CD4-positive, alpha-beta memory T cell (primary cell): ENCODE measurements at regions of chr19 and their contacts with region 1.

Region 1: DNA sequence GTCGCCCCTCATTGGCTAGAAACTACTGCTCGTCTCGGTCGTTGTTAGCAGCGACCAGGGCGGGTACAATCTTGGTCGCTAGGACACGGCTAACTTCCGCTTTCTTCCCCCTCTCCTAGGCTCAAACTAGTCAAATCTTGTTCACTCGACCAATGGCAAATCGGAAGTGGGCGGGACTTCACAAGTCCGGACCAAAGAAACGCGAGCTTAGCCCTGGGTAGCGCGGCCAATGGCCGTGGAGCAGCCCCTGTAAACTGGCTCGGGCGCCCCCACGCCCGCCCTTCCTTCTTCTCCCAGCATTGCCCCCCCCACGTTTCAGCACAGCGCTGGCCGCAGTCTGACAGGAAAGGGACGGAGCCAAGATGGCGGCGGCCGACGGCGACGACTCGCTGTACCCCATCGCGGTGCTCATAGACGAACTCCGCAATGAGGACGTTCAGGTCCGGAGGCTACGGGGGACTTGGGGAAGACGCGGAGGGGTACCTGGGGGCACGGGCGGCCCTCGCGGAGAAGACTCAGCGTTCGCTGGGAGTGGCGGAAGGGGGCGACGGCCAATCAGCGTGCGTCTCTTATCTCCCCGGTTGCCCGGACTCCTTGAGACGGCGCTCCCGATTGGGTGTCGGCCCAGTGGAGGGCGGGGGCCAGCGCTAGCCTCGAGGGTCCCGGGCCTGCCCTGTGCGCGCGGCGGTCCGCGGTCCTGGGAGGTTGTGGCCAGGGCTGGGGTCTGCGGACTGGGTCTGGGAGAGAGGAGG is at the start of gene PPP2R1A:
- DNase-seq: peak; percentile 97 to 100 (median 99)
- H3K4me3 ChIP-seq: peak within 1 kb of the TSS; percentile 75 to 87
- H3K4me3 Mint-ChIP-seq: peak within 1 kb of the TSS; percentile 94 to 99 (median 98)
- H3K27ac ChIP-seq: peak within 1 kb of the TSS; percentile 93
- H3K27ac Mint-ChIP-seq: peak within 1 kb of the TSS; percentile 92 to 100 (median 99)
- H3K4me1 ChIP-seq: peaks cover 53% of the 10 kb centered on the region
- H3K4me1 Mint-ChIP-seq: peaks cover 34 to 58% (median 43%) of the 10 kb centered on the region in 4 donors
- H3K27me3 ChIP-seq: no peaks in the 10 kb centered on the region
- H3K27me3 Mint-ChIP-seq: no peaks in the 10 kb centered on the region
- total RNA-seq, gene PPP2R1A: 166 to 175 TPM

Region 2: DNA sequence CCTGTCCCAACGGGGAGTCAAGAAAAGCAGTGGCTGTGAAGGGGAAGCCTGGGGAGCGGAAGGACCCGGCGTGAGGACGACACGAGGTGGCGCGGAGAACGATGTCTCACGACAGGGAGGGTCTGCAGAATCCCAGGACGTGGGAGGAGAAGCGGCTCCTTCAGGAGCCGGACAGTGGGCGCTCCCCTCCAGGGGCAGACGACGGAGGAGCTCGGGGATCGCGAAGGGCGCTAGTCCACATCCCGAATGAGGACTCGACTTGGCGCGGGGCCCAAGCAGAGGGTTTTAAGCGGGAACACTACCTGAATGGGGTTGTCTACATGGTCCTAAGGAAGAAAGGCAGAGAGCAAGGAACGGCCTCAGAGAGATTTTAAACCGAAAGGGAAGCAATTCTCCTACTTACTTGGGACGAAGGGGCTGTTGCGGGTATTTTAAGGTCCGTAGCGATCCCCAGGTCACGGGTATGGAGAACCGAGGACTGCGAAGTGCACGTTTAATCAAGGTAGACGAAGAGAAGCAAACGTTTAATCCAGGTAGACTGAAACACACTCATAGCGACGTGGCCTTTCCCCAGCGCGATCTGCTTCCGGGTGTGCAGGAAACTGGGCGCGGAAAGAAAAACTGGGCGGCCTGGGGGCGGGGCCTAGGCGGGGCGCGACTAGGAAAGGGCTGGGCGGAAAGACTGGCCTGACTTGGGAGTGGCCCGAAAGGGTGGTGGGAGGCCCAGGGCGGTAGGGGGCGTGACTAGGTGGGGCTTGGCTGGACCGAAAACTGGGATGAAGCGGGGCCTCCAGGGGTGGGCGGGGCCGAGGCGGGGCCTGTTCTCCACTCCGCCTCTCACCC is 94.5 kb before region 1 on chr19 and contains the start of gene ZNF841:
- CTCF ChIA-PET with region 1: no interaction called
- POLR2A ChIA-PET with region 1: interaction called, 3 read pairs
- intact Hi-C with region 1: loop called (anchors 1 kb)
- DNase-seq: peak; percentile 77 to 84 (median 80)
- H3K4me3 ChIP-seq: peak within 1 kb of the TSS; percentile 55 to 98
- H3K4me3 Mint-ChIP-seq: peak within 1 kb of the TSS; percentile 94 to 99 (median 99)
- H3K27ac ChIP-seq: peak within 1 kb of the TSS; percentile 81
- H3K27ac Mint-ChIP-seq: peak within 1 kb of the TSS; percentile 92 to 98 (median 98)
- H3K4me1 ChIP-seq: peaks cover 17% of the 10 kb centered on the region
- H3K4me1 Mint-ChIP-seq: peaks cover 20 to 41% (median 32%) of the 10 kb centered on the region in 4 donors
- H3K27me3 ChIP-seq: no peaks in the 10 kb centered on the region
- H3K27me3 Mint-ChIP-seq: peaks cover 0 to 1% of the 10 kb centered on the region in 2 donors
- total RNA-seq, gene ZNF841: 48.0 to 56.0 TPM

Region 3: GRCh38 chr19:52171321-52172169 is 18.4 kb before region 1 on chr19 and contains the start of gene ZNF836:
- CTCF ChIA-PET with region 1: interaction called, 7 read pairs
- POLR2A ChIA-PET with region 1: interaction called, 67 read pairs
- intact Hi-C with region 1: loop called (anchors 1 kb)
- DNase-seq: peak; percentile 89 to 93 (median 92)
- H3K4me3 ChIP-seq: peak within 1 kb of the TSS; percentile 90 to 93
- H3K4me3 Mint-ChIP-seq: peak within 1 kb of the TSS; percentile 89 to 99 (median 96)
- H3K27ac ChIP-seq: peak within 1 kb of the TSS; percentile 80
- H3K27ac Mint-ChIP-seq: peak within 1 kb of the TSS; percentile 83 to 97 (median 97)
- H3K4me1 ChIP-seq: peaks cover 25% of the 10 kb centered on the region
- H3K4me1 Mint-ChIP-seq: peaks cover 23 to 39% (median 35%) of the 10 kb centered on the region in 4 donors
- H3K27me3 ChIP-seq: no peaks in the 10 kb centered on the region
- H3K27me3 Mint-ChIP-seq: no peaks in the 10 kb centered on the region
- total RNA-seq, gene ZNF836: 47.2 to 54.7 TPM

Region 4: GRCh38 chr19:52231154-52231910 is 41.4 kb after region 1 on chr19:
- CTCF ChIA-PET with region 1: no interaction called
- POLR2A ChIA-PET with region 1: no interaction called
- intact Hi-C with region 1: loop called (anchors 5 kb)
- DNase-seq: no peak
- H3K4me3 ChIP-seq: no peak overlapping the region
- H3K4me3 Mint-ChIP-seq: no peak overlapping the region
- H3K27ac ChIP-seq: no peak overlapping the region
- H3K27ac Mint-ChIP-seq: peak overlapping the region in 4 of 7 donors; percentile 4 to 54 (median 17)
- H3K4me1 ChIP-seq: no peaks in the 10 kb centered on the region
- H3K4me1 Mint-ChIP-seq: peaks cover 0 to 3% (median 2%) of the 10 kb centered on the region in 4 donors
- H3K27me3 ChIP-seq: no peaks in the 10 kb centered on the region
- H3K27me3 Mint-ChIP-seq: no peaks in the 10 kb centered on the region